ENCODE measurements at regions of chr4 and their contacts with region 1.

Region 1: GRCh38 chr4:147547314-147548056 is 66.6 kb downstream of the EDNRA start:
- DNase-seq: peak; percentile 90
- H3K4me3 Mint-ChIP-seq: no peak overlapping the region
- H3K27ac Mint-ChIP-seq: peak overlapping the region; percentile 10
- H3K4me1 Mint-ChIP-seq: peaks cover 48% of the 10 kb centered on the region
- H3K27me3 Mint-ChIP-seq: no peaks in the 10 kb centered on the region
- CTCF ChIP-seq: no peak

Region 2: DNA sequence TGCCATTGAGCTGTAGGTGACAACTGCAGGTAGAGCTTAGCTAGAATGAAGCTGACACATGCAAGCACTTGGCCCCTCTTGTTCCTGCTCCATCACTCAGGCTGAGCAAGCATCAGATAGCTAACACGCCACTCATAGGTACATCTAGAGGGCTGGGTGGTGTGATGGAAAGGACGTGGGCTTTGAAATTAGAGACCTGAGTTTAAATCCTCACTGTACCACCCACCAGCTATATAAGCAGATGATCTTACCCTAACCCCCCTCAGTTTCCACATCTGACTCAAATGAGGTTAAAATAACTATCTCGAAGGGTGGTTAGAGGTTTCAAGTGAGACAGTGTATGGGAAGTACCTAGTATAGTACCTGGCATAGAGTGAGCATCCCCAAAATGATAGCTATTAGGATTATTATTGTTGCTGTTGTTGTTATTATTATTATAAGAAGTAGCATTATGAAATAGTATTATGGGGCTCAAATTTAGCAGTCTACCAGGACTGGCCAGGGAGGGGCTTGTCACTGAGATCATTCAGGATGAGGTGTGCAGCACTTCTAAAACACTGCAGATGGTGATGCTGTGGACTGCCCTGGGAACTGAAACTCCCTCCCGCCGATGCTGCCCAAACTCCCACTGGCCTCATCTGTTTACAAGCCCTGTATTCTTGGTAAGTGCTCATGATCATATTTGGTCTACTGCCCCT is 1274.1 kb before region 1 on chr4:
- CTCF ChIA-PET with region 1: no interaction called
- POLR2A ChIA-PET with region 1: no interaction called
- intact Hi-C with region 1: no loop called
- DNase-seq: no peak
- H3K4me3 Mint-ChIP-seq: no peak overlapping the region
- H3K27ac Mint-ChIP-seq: no peak overlapping the region
- H3K4me1 Mint-ChIP-seq: no peaks in the 10 kb centered on the region
- H3K27me3 Mint-ChIP-seq: no peaks in the 10 kb centered on the region
- CTCF ChIP-seq: no peak

Region 3: GRCh38 chr4:147398556-147398955 is 148.9 kb before region 1 on chr4:
- CTCF ChIA-PET with region 1: no interaction called
- POLR2A ChIA-PET with region 1: no interaction called
- intact Hi-C with region 1: no loop called
- DNase-seq: no peak
- H3K4me3 Mint-ChIP-seq: no peak overlapping the region
- H3K27ac Mint-ChIP-seq: no peak overlapping the region
- H3K4me1 Mint-ChIP-seq: peaks cover 5% of the 10 kb centered on the region
- H3K27me3 Mint-ChIP-seq: no peaks in the 10 kb centered on the region
- CTCF ChIP-seq: no peak

Region 4: DNA sequence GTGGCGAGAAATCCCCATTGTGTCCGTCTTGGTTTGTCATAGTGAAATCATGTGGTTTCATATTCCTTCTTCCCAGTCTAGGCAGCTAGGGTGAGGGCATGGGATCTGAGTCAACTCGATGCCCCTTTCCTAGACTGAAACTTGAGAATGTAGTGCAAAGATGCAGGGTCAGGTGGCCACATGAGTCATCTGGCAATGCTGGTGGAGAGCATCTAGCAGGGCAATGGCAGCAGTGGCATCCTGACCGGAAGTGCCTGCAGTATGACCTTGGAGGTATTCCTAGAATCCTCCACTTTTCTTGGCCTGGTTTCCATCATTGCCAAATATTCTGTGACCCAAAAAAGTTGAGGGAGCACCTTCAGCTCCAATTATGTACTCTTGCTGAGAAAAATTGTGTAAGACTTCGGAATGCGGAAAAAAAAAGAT is 30.6 kb after region 1 on chr4:
- CTCF ChIA-PET with region 1: interaction called, 4 read pairs
- POLR2A ChIA-PET with region 1: interaction called, 5 read pairs
- intact Hi-C with region 1: loop called (anchors 2 kb)
- DNase-seq: peak; percentile 99
- H3K4me3 Mint-ChIP-seq: peak overlapping the region; percentile 17
- H3K27ac Mint-ChIP-seq: peak overlapping the region; percentile 76
- H3K4me1 Mint-ChIP-seq: peaks cover 42% of the 10 kb centered on the region
- H3K27me3 Mint-ChIP-seq: no peaks in the 10 kb centered on the region
- CTCF ChIP-seq: no peak

Region 5: GRCh38 chr4:147658501-147658900 is 111.0 kb after region 1 on chr4:
- CTCF ChIA-PET with region 1: no interaction called
- POLR2A ChIA-PET with region 1: no interaction called
- intact Hi-C with region 1: no loop called
- DNase-seq: no peak
- H3K4me3 Mint-ChIP-seq: no peak overlapping the region
- H3K27ac Mint-ChIP-seq: peak overlapping the region; percentile 9
- H3K4me1 Mint-ChIP-seq: no peaks in the 10 kb centered on the region
- H3K27me3 Mint-ChIP-seq: no peaks in the 10 kb centered on the region
- CTCF ChIP-seq: no peak